ENCODE measurements at regions of chr2 and their contacts with region 1.

Region 1: GRCh38 chr2:43312755-43313641 is 86.6 kb upstream of the ZFP36L2 start:
- DNase-seq: no peak
- ATAC-seq: no peak
- H3K4me3 ChIP-seq: no peak overlapping the region
- H3K27ac ChIP-seq: no peak overlapping the region
- H3K4me1 ChIP-seq: peaks cover 34% of the 10 kb centered on the region
- CTCF ChIP-seq: no peak
- EP300 ChIP-seq: no peak
- POLR2A ChIP-seq: no peak
- RAD21 ChIP-seq: no peak

Region 2: GRCh38 chr2:43300840-43301583 is 12.0 kb before region 1 on chr2:
- CTCF ChIA-PET with region 1: interaction called, 5 read pairs
- POLR2A ChIA-PET with region 1: interaction called, 10 read pairs
- DNase-seq: no peak
- ATAC-seq: peak in 1 of 2 experiments; percentile 29; a peak in 2 of 6 replicates
- H3K4me3 ChIP-seq: no peak overlapping the region
- H3K27ac ChIP-seq: 0 out of 6 replicates have a peak overlapping the region, but pooled peaks of 1 of the 2 experiments have one; percentile 25
- H3K4me1 ChIP-seq: peaks cover 25% of the 10 kb centered on the region; the same call in 2 of the 3 replicates
- CTCF ChIP-seq: no peak
- EP300 ChIP-seq: no peak
- POLR2A ChIP-seq: 0 out of 2 replicates have a peak, but pooled peaks have one; percentile 7
- RAD21 ChIP-seq: no peak

Region 3: GRCh38 chr2:43519643-43520221 is 206.7 kb after region 1 on chr2:
- CTCF ChIA-PET with region 1: no interaction called
- POLR2A ChIA-PET with region 1: no interaction called
- DNase-seq: peak in 1 of 2 experiments; percentile 39
- ATAC-seq: peak in 1 of 2 experiments; percentile 76; a peak in 3 of 6 replicates
- H3K4me3 ChIP-seq: no peak overlapping the region
- H3K27ac ChIP-seq: peak overlapping the region in 1 of 2 experiments; percentile 19; a peak in 1 of 6 replicates
- H3K4me1 ChIP-seq: peaks cover 15% of the 10 kb centered on the region
- CTCF ChIP-seq: no peak
- EP300 ChIP-seq: no peak
- POLR2A ChIP-seq: no peak
- RAD21 ChIP-seq: no peak